ENCODE measurements at regions of chr3 and their contacts with region 1.

Region 1: GRCh38 chr3:73572368-73572767 is 52.4 kb downstream of the PDZRN3 start:
- DNase-seq: peak; percentile 75 to 89
- H3K4me3 ChIP-seq: no peak overlapping the region
- H3K4me3 Mint-ChIP-seq: peak overlapping the region; percentile 62
- H3K27ac Mint-ChIP-seq: peak overlapping the region; percentile 82
- H3K4me1 ChIP-seq: peaks cover 71% of the 10 kb centered on the region
- H3K4me1 Mint-ChIP-seq: peaks cover 59% of the 10 kb centered on the region
- H3K27me3 ChIP-seq: no peaks in the 10 kb centered on the region
- H3K27me3 Mint-ChIP-seq: no peaks in the 10 kb centered on the region
- CTCF ChIP-seq: no peak

Region 2: DNA sequence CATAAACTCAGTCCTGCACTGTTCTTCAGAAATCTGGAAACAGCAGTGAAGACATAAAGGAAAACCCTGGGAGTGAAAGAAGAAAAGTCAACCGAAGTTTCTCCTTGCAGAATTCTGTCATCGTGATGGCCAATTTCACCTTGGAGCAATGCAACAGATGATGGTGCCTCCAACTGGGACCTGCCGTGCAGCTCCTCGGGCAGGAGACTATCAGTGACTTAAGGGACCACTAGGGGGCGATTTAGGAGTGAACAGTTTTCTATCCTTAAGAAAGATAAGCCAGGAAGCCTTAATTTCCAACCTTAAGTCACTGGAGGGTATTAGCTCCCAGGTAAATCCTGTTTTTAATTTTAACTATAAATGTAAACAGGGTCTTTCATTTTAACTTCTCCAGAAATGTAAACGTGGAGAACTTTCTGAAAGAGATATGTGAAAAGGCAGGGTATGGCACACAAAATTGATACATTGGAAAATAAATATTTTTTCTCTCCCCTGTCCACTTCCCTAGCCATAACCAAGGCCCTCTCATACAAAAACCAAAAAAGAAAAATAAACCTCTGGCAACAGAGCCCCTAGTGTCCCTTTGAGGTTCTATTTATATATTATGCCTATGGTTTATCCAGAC is 63.9 kb before region 1 on chr3:
- CTCF ChIA-PET with region 1: interaction called, 5 read pairs
- POLR2A ChIA-PET with region 1: no interaction called
- intact Hi-C with region 1: loop called (anchors 1 kb)
- DNase-seq: peak; percentile 57 to 71
- H3K4me3 ChIP-seq: no peak overlapping the region
- H3K4me3 Mint-ChIP-seq: no peak overlapping the region
- H3K27ac Mint-ChIP-seq: no peak overlapping the region
- H3K4me1 ChIP-seq: peaks cover 44% of the 10 kb centered on the region
- H3K4me1 Mint-ChIP-seq: peaks cover 3% of the 10 kb centered on the region
- H3K27me3 ChIP-seq: no peaks in the 10 kb centered on the region
- H3K27me3 Mint-ChIP-seq: no peaks in the 10 kb centered on the region
- CTCF ChIP-seq: peak; percentile 68 to 78

Region 3: GRCh38 chr3:73592154-73593144 is 20.1 kb after region 1 on chr3:
- CTCF ChIA-PET with region 1: no interaction called
- POLR2A ChIA-PET with region 1: interaction called, 7 read pairs
- intact Hi-C with region 1: loop called (anchors 1 kb)
- DNase-seq: no peak
- H3K4me3 ChIP-seq: no peak overlapping the region
- H3K4me3 Mint-ChIP-seq: no peak overlapping the region
- H3K27ac Mint-ChIP-seq: no peak overlapping the region
- H3K4me1 ChIP-seq: peaks cover 13% of the 10 kb centered on the region
- H3K4me1 Mint-ChIP-seq: peaks cover 18% of the 10 kb centered on the region
- H3K27me3 ChIP-seq: no peaks in the 10 kb centered on the region
- H3K27me3 Mint-ChIP-seq: no peaks in the 10 kb centered on the region
- CTCF ChIP-seq: no peak

Region 4: GRCh38 chr3:73605412-73605811 is 33.0 kb after region 1 on chr3:
- CTCF ChIA-PET with region 1: no interaction called
- POLR2A ChIA-PET with region 1: no interaction called
- intact Hi-C with region 1: loop called (anchors 1 kb)
- DNase-seq: no peak
- H3K4me3 ChIP-seq: no peak overlapping the region
- H3K4me3 Mint-ChIP-seq: no peak overlapping the region
- H3K27ac Mint-ChIP-seq: no peak overlapping the region
- H3K4me1 ChIP-seq: peaks cover 29% of the 10 kb centered on the region
- H3K4me1 Mint-ChIP-seq: peaks cover 20% of the 10 kb centered on the region
- H3K27me3 ChIP-seq: no peaks in the 10 kb centered on the region
- H3K27me3 Mint-ChIP-seq: no peaks in the 10 kb centered on the region
- CTCF ChIP-seq: no peak

Region 5: GRCh38 chr3:73624821-73625665 is 52.7 kb after region 1 on chr3 and contains the start of gene PDZRN3:
- CTCF ChIA-PET with region 1: no interaction called
- POLR2A ChIA-PET with region 1: interaction called, 3 read pairs
- intact Hi-C with region 1: loop called (anchors 1 kb)
- DNase-seq: peak; percentile 67 to 69
- H3K4me3 ChIP-seq: peak within 1 kb of the TSS; percentile 68
- H3K4me3 Mint-ChIP-seq: peak within 1 kb of the TSS; percentile 86
- H3K27ac Mint-ChIP-seq: peak within 1 kb of the TSS; percentile 79
- H3K4me1 ChIP-seq: peaks cover 26% of the 10 kb centered on the region
- H3K4me1 Mint-ChIP-seq: peaks cover 16% of the 10 kb centered on the region
- H3K27me3 ChIP-seq: no peaks in the 10 kb centered on the region
- H3K27me3 Mint-ChIP-seq: no peaks in the 10 kb centered on the region
- CTCF ChIP-seq: no peak
- total RNA-seq, gene PDZRN3: 12.5 and 13.6 TPM in 2 replicates

Region 6: GRCh38 chr3:73766599-73767381 is 194.4 kb after region 1 on chr3:
- CTCF ChIA-PET with region 1: no interaction called
- POLR2A ChIA-PET with region 1: no interaction called
- intact Hi-C with region 1: no loop called
- DNase-seq: no peak
- H3K4me3 ChIP-seq: no peak overlapping the region
- H3K4me3 Mint-ChIP-seq: no peak overlapping the region
- H3K27ac Mint-ChIP-seq: no peak overlapping the region
- H3K4me1 ChIP-seq: no peaks in the 10 kb centered on the region
- H3K4me1 Mint-ChIP-seq: peaks cover 6% of the 10 kb centered on the region
- H3K27me3 ChIP-seq: no peaks in the 10 kb centered on the region
- H3K27me3 Mint-ChIP-seq: peaks cover 4% of the 10 kb centered on the region
- CTCF ChIP-seq: no peak

Measured in Caco-2 (cell line).